ENCODE measurements at regions of chr10 and their contacts with region 1.

Region 1: DNA sequence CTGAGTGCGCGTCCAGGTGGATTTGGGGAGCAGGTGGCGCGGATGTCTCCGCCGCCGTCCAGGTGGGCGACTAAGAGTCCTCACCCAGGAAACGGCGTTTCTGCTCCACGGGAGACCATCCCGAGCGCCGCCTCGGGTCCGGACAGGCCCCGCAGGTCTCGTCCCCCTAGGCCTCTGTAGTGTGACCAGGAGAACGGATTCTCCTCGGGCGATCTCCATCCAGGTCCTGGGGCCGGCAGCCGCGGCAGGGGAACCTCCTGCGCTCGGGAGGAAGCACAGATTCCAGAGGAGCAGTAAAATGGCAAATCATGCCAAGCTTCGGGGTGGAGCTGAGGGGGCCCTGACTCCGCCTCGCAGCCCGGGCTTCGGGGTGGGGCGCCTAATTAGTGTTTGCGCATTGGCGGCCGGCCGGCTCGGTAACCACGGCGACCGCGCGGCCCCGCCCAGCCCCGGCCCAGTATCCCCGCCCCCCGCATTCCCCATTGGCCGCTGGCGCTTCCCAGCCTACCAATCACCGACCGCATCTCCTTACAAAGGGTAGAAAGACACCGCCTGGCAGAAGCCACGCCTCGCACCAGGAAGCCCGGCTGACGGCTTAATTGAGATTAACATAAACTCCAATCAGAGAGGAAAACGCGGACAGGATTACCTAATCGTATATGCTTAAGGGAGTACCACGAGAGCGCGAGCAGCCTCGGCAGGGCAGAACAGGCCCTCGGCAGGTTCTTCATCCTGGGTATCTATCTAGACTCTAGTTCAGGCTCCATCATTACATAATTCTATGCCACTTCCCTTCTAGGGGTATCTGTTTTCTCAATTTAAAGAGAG is 168.6 kb downstream of the ARHGAP12 start:
- DNase-seq: peak; percentile 93 to 96 (median 95)
- H3K4me3 ChIP-seq: peak overlapping the region; percentile 91
- H3K27ac ChIP-seq: peak overlapping the region; percentile 77 to 84
- H3K4me1 ChIP-seq: peaks cover 4% of the 10 kb centered on the region
- H3K27me3 ChIP-seq: no peaks in the 10 kb centered on the region
- CTCF ChIP-seq: peak in 1 of 3 donors; percentile 16
- EP300 ChIP-seq: peak; percentile 23
- POLR2A ChIP-seq: peak; percentile 86

Region 2: GRCh38 chr10:31118556-31118955 is 641.5 kb before region 1 on chr10:
- intact Hi-C with region 1: no loop called
- DNase-seq: no peak
- H3K4me3 ChIP-seq: no peak overlapping the region
- H3K27ac ChIP-seq: no peak overlapping the region
- H3K4me1 ChIP-seq: peaks cover 3% of the 10 kb centered on the region
- H3K27me3 ChIP-seq: no peaks in the 10 kb centered on the region
- CTCF ChIP-seq: no peak
- EP300 ChIP-seq: no peak
- POLR2A ChIP-seq: no peak

Region 3: DNA sequence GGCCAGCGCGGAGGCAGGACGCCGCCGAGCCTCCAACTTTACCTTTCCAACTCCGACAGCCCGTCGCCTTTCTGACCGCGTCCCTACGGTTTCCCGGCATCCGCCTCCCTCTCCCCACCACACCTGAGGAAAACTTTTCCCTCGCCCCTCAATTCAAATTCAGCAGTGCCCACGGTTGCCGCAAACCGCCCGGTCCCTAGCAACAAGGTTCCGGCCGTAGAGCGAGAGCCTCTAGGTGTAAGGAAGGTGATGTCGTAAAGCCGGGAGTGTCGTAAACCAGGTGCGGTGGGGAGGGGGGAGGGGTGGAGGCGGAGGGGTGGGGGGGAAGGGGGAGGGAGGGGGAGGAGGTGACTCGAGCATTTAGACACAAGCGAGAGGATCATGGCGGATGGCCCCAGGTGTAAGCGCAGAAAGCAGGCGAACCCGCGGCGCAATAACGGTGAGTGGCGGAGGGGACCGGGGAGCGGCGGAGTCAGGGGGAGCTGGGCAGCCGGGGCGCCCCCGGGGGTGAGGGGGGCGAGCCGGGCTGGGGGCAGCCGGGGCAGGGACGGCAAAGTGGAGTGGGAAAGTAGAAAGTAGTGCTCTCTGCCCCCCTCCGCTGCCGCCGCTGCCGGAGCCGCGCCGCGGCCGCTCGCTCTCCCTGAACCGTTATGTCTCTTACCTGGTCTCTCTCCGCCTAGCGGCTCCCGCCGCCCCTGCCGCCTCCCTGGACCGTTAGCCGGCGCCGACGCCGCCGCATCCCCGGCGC is 441.0 kb before region 1 on chr10 and contains the start of gene ZEB1:
- intact Hi-C with region 1: loop called in 1 of 4 experiments (anchors 5 kb)
- DNase-seq: peak; percentile 87 to 95 (median 92)
- H3K4me3 ChIP-seq: peak within 1 kb of the TSS; percentile 95
- H3K27ac ChIP-seq: peak within 1 kb of the TSS; percentile 89 to 94
- H3K4me1 ChIP-seq: no peaks in the 10 kb centered on the region
- H3K27me3 ChIP-seq: no peaks in the 10 kb centered on the region
- CTCF ChIP-seq: peak; percentile 30 to 69 (median 58)
- EP300 ChIP-seq: no peak
- POLR2A ChIP-seq: peak; percentile 40
- total RNA-seq, gene ZEB1: 23.3 to 48.4 (median 40.7) TPM

Region 4: DNA sequence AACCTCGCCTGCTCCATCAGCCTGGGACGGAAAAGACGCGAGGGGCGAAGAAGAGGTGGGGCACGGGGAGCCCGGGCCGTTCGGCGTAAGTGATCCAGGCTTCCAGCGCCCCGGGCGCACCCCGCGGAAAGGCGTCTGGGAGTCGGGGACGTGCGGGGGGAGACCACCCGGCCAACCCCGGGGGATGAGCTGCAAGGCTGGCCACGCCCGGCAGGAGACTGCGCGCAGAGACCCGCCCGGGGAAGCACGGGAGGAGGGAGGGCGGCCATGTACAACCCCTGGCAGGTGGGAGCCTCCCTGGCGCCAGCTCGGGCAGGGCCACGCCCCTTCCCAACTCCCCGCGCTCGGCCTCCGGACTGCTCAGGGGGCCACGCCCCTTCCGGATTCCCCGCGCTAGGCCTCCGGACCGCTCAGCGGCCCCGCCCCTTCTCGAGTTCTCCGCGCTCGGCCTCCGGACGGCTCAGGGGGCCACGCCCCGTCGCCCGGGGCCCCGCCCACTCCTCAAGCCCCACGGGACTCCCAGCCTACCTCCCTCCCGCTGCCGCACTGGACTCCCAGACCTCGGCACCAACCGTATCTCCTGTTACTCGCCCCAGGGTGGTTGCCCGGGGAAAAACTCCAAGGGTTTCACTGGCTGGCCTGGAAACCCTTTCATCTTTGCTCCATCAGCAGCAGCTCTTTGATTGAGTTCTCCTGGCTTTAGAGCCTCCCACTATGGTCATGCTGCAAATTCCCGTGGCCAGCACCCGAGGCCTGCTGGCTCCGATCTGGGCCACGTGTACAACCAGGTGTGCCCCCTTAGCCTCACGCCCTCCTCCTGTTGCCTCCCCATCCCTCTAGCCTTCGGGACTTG is 156.6 kb before region 1 on chr10:
- intact Hi-C with region 1: loop called in 1 of 4 experiments (anchors 2 kb)
- DNase-seq: peak; percentile 96 to 98 (median 97)
- H3K4me3 ChIP-seq: peak overlapping the region; percentile 53
- H3K27ac ChIP-seq: peak overlapping the region; percentile 26 to 79
- H3K4me1 ChIP-seq: peaks cover 6% of the 10 kb centered on the region
- H3K27me3 ChIP-seq: no peaks in the 10 kb centered on the region
- CTCF ChIP-seq: peak in 2 of 3 donors; percentile 45 to 54
- EP300 ChIP-seq: no peak
- POLR2A ChIP-seq: peak; percentile 54

Region 5: DNA sequence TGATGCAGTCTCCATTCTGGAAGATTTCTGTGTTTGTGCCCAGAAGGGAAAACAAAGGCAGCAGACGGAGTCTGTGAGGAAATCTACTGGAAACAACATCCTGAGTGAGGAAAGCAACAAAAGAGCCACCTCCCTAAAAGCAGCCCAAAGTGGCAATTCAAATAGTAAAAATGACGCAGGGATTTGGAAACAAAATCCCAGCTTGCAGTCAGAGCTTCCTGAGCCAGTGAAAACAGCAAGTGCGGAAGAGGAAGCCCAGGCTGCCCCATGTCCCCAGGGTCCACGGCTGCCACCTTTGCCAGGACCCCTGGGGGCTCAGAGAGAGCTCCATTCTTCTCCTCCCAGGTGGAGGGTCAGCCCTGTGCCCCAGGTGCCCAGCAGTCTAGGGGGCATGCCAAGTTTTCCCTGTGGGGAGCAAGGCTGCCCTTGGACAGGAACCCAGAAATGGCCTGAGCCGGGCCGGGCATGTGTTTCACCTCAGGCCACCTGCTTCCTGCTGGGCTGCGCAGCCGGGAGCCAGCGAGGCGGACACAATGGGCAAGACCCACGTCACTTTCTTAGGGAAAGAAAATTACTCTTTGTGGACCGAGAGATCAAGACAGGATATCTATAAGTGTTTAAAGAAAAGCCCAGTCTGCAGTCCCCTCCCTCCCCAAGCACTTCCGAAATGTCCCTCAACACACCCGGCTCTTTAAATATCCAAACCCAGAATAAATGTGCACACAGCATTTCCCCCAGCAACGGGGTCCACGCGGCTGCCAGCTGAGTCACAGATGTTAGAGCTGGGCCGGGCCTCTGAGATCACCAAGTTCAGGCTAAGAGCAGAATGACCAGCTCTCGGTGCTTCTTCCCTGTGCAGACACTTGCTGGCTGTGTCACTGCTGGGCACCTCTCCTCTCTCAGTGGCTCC is 62.5 kb before region 1 on chr10:
- intact Hi-C with region 1: loop called in 2 of 4 experiments (anchors 5 to 10 kb)
- DNase-seq: peak; percentile 70 to 79 (median 72)
- H3K4me3 ChIP-seq: no peak overlapping the region
- H3K27ac ChIP-seq: peak overlapping the region; percentile 75 to 90
- H3K4me1 ChIP-seq: peaks cover 18% of the 10 kb centered on the region
- H3K27me3 ChIP-seq: no peaks in the 10 kb centered on the region
- CTCF ChIP-seq: no peak
- EP300 ChIP-seq: peak; percentile 52
- POLR2A ChIP-seq: no peak

Region 6: GRCh38 chr10:31707093-31708039 is 52.6 kb before region 1 on chr10:
- intact Hi-C with region 1: loop called in 1 of 4 experiments (anchors 10 kb)
- DNase-seq: peak; percentile 64 to 76 (median 72)
- H3K4me3 ChIP-seq: no peak overlapping the region
- H3K27ac ChIP-seq: peak overlapping the region; percentile 1 to 55
- H3K4me1 ChIP-seq: peaks cover 7% of the 10 kb centered on the region
- H3K27me3 ChIP-seq: no peaks in the 10 kb centered on the region
- CTCF ChIP-seq: no peak
- EP300 ChIP-seq: no peak
- POLR2A ChIP-seq: no peak

Measured in ovary (tissue), 10 donors.